ENCODE measurements at regions of chr6 and their contacts with region 1.

Region 1: DNA sequence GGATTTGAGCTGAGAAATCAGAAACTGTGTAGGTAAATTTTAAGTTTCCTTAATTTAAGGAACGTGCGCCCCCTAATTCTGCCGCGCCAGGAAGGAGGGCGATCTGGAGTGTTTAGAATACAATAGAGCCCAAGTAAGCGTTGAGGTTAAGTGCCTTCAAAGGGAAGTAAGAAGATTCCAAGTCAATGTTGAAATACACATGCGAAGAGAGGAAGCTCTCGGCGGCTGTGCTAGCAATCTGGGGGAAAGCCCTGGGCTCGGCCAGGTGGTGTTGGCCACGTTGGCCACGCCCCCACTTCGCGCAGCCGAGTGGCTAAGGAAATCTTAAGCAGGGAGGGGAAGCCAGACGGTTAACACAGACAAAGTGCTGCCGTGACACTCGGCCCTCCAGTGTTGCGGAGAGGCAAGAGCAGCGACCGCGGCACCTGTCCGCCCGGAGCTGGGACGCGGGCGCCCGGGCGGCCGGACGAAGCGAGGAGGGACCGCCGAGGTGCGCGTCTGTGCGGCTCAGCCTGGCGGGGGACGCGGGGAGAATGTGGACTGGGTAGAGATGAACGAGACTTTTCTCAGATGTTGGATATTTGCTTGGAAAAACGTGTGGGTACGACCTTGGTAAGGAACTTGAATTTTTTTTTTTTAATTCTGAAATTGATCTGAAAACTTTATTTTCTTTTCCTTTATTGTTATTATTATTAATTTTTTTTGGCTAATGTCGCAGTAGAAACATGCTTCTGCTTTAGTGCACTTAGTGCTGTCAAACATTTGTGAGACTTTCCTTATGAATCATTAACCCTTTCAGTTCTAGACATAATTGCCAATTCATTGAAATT is at the start of gene PRDM1:
- DNase-seq: peak; percentile 98
- H3K4me3 ChIP-seq: peak within 1 kb of the TSS; percentile 63
- H3K27ac ChIP-seq: peak within 1 kb of the TSS; percentile 87
- H3K4me1 ChIP-seq: peaks cover 73% of the 10 kb centered on the region
- CTCF ChIP-seq: peak; percentile 69
- total RNA-seq, gene PRDM1: 1.5 and 2.2 TPM in 2 replicates

Region 2: GRCh38 chr6:105733565-105734162 is 352.5 kb before region 1 on chr6:
- CTCF ChIA-PET with region 1: no interaction called
- POLR2A ChIA-PET with region 1: interaction called, 4 read pairs
- intact Hi-C with region 1: loop called (anchors 1 kb)
- DNase-seq: peak; percentile 73
- H3K4me3 ChIP-seq: no peak overlapping the region
- H3K27ac ChIP-seq: no peak overlapping the region
- H3K4me1 ChIP-seq: peaks cover 3% of the 10 kb centered on the region
- CTCF ChIP-seq: peak; percentile 99

Region 3: DNA sequence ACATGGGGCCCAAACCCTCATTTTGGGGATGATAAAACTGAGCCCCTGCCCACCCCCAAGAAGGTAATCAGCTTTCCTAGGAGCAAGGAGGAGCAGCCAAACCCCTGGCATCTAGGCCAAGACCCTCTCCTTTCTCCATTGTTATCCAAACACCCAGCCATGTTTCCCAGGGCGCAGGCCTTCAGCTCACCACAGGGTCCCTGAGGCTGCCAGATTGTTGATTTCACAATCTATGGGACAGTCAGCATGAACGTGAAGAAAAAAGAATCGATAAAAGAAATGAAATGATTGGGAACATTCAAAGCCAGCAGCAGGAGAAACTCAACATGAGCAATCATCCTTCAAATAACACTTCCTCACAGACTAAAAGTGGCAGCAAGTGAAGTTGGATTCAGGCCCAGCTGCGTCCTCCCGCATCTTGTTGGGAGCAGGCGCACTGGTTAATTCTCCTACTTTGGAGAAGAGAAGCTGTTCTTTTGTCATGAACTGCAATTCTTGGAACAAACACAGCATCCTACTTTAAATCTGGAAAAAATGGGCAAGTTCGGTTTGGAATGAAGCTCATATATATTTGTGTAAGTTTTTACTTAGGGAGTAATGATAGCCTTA is 241.8 kb before region 1 on chr6:
- CTCF ChIA-PET with region 1: no interaction called
- POLR2A ChIA-PET with region 1: no interaction called
- intact Hi-C with region 1: no loop called
- DNase-seq: no peak
- H3K4me3 ChIP-seq: no peak overlapping the region
- H3K27ac ChIP-seq: no peak overlapping the region
- H3K4me1 ChIP-seq: no peaks in the 10 kb centered on the region
- CTCF ChIP-seq: no peak

Region 4: DNA sequence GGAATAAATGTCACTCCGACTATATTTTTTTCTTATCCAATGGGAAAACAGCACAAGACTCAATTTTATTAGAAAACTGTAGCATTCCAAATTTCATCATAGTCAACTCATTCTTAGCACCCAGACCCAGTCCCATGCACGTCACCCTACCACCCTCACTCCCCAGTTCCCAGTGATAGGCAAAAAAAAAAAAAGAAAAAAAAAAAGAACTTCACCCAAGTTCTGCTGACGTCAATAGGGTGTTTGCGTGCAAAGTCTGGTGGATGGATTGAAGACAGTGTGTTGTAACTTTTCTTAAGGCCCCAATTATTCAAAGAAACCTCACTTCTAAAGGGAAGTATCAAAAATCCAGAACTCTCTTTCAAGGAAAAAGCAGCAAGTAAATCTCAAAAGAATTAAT is 214.0 kb before region 1 on chr6:
- CTCF ChIA-PET with region 1: interaction called, 3 read pairs
- POLR2A ChIA-PET with region 1: no interaction called
- intact Hi-C with region 1: loop called (anchors 5 kb)
- DNase-seq: no peak
- H3K4me3 ChIP-seq: no peak overlapping the region
- H3K27ac ChIP-seq: no peak overlapping the region
- H3K4me1 ChIP-seq: peaks cover 93% of the 10 kb centered on the region
- CTCF ChIP-seq: no peak

Region 5: DNA sequence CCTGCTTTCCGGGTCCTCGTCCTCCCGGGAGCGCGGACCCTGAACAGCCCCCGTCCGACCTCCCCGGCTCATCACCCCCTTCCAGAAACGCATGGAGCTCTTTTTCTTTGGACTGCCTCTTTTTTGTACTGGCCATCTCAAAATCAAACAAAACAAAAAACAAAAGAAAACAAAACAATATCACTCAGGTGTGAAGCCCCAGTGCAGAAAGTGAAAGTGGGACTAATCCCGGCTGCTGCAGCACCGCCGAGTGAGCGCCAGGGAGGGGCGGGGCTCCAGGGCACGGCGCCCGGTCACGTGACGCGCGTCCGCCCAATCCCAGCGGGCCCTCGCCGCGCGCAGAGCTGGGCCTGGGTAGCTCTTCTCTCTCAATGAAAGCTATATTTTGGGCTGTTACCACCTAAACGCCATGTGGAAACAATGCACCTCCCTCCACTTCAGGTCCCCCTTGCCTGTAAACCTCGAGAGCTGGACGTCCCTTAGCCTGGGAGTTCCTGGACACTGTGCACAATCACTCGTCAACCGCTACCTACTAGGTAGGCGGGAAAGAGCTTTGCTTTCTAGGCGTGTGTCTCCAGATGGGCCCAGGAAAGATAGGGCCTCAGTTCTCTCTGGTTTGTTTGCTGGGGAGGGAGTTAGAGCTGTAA is 93.8 kb before region 1 on chr6:
- CTCF ChIA-PET with region 1: interaction called, 3 read pairs
- POLR2A ChIA-PET with region 1: interaction called, 10 read pairs
- intact Hi-C with region 1: loop called (anchors 1 kb)
- DNase-seq: peak; percentile 93
- H3K4me3 ChIP-seq: peak overlapping the region; percentile 79
- H3K27ac ChIP-seq: peak overlapping the region; percentile 53
- H3K4me1 ChIP-seq: peaks cover 39% of the 10 kb centered on the region
- CTCF ChIP-seq: no peak

Region 6: GRCh38 chr6:106184629-106185028 is 98.4 kb after region 1 on chr6:
- CTCF ChIA-PET with region 1: no interaction called
- POLR2A ChIA-PET with region 1: no interaction called
- intact Hi-C with region 1: no loop called
- DNase-seq: no peak
- H3K4me3 ChIP-seq: no peak overlapping the region
- H3K27ac ChIP-seq: no peak overlapping the region
- H3K4me1 ChIP-seq: peaks cover 15% of the 10 kb centered on the region
- CTCF ChIP-seq: no peak

Region 7: GRCh38 chr6:106223300-106223930 is 137.2 kb after region 1 on chr6:
- CTCF ChIA-PET with region 1: interaction called, 25 read pairs
- POLR2A ChIA-PET with region 1: interaction called, 22 read pairs
- intact Hi-C with region 1: loop called (anchors 1 kb)
- DNase-seq: peak; percentile 85
- H3K4me3 ChIP-seq: no peak overlapping the region
- H3K27ac ChIP-seq: no peak overlapping the region
- H3K4me1 ChIP-seq: no peaks in the 10 kb centered on the region
- CTCF ChIP-seq: peak; percentile 92

Measured in OCI-LY7 (cell line).